ENCODE measurements at regions of chr12 and their contacts with region 1.

Region 1: GRCh38 chr12:95805864-95806671 is 15.5 kb upstream of the NTN4 start:
- DNase-seq: peak; percentile 61 to 100
- H3K4me3 ChIP-seq: peak overlapping the region; percentile 11; the same call in 1 of the 2 replicates
- H3K27ac ChIP-seq: peak overlapping the region; percentile 100
- H3K4me1 ChIP-seq: peaks cover 95% of the 10 kb centered on the region
- H3K27me3 ChIP-seq: no peaks in the 10 kb centered on the region
- CTCF ChIP-seq: no peak

Region 2: DNA sequence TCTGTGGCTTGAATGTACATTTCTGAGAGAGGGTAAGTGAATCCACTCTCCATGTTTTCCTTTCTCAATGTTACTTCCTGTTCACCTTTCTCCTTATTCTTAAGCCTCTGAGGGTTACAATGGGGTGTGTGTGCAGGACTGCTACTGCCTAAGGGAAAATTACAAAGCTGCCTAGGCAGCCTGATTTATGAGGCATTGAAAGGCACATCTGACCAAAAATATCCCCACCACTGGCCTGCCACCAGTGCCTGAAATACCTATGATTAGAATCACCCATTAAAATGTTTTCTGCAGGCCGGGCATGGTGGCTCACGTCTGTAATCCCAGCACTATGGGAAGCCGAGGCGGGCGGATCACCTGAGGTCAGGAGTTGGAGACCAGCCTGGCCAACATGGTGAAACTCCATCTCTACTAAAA is 156.7 kb before region 1 on chr12:
- CTCF ChIA-PET with region 1: no interaction called
- POLR2A ChIA-PET with region 1: interaction called, 9 read pairs
- intact Hi-C with region 1: loop called (anchors 2 kb)
- DNase-seq: peak; percentile 86 to 98
- H3K4me3 ChIP-seq: peak overlapping the region; percentile 27; the same call in 1 of the 2 replicates
- H3K27ac ChIP-seq: peak overlapping the region; percentile 98
- H3K4me1 ChIP-seq: peaks cover 72% of the 10 kb centered on the region
- H3K27me3 ChIP-seq: no peaks in the 10 kb centered on the region
- CTCF ChIP-seq: no peak

Region 3: DNA sequence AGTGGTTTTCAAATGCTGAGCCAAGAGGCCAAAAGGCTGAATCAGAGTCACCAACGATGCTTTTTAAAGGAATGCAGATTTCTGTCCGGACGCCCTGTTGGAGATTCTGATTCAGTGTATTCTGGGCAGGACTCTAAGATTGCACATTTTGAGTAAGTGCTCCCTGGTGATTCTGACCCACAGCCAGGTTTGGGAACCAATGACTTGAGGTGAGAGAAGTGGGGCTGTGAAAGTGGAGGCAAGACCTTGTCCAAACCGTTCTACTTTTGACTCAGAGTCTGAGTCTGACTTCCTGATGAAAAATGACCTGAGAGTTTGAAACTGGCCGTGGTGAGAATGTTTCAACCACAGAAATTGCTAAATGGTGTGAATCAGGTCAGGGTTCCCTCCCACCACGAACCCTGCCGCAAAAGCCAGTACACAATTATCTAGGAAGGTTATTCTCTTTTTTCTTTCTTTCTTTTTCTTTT is 105.7 kb before region 1 on chr12:
- CTCF ChIA-PET with region 1: no interaction called
- POLR2A ChIA-PET with region 1: no interaction called
- intact Hi-C with region 1: loop called (anchors 5 kb)
- DNase-seq: peak; percentile 10 to 91
- H3K4me3 ChIP-seq: no peak overlapping the region
- H3K27ac ChIP-seq: peak overlapping the region; percentile 96
- H3K4me1 ChIP-seq: peaks cover 37% of the 10 kb centered on the region
- H3K27me3 ChIP-seq: no peaks in the 10 kb centered on the region
- CTCF ChIP-seq: no peak

Region 4: GRCh38 chr12:95790033-95790911 is 15.8 kb before region 1 on chr12 and contains the start of gene NTN4:
- CTCF ChIA-PET with region 1: interaction called, 13 read pairs
- POLR2A ChIA-PET with region 1: interaction called, 5 read pairs
- intact Hi-C with region 1: loop called (anchors 2 kb)
- DNase-seq: peak in 1 of 2 experiments; percentile 44
- H3K4me3 ChIP-seq: peak within 1 kb of the TSS; percentile 93
- H3K27ac ChIP-seq: peak within 1 kb of the TSS; percentile 96
- H3K4me1 ChIP-seq: peaks cover 71% of the 10 kb centered on the region
- H3K27me3 ChIP-seq: no peaks in the 10 kb centered on the region
- CTCF ChIP-seq: no peak
- total RNA-seq, gene NTN4: 41.5 and 46.0 TPM in 2 replicates

Region 5: DNA sequence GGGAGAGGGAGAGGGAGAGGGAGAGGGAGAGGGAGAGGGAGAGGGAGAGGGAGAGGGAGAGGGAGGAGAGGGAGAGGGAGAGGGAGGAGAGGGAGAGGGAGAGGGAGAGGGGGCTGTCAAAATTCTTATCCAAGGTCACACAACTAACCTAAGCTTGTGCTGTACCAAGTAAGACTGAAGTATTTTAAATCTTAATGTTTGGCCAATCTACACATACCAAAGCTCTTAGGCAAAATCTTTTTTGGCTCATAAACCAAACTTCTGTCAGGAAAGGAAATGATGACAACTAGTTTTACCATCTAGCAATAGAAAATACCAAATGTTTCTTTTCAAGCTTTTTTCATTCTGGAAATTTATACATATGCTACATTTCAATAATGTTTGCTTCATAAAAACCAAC is 102.5 kb after region 1 on chr12:
- CTCF ChIA-PET with region 1: no interaction called
- POLR2A ChIA-PET with region 1: no interaction called
- intact Hi-C with region 1: no loop called
- DNase-seq: no peak
- H3K4me3 ChIP-seq: no peak overlapping the region
- H3K27ac ChIP-seq: no peak overlapping the region
- H3K4me1 ChIP-seq: no peaks in the 10 kb centered on the region
- H3K27me3 ChIP-seq: no peaks in the 10 kb centered on the region
- CTCF ChIP-seq: no peak

Region 6: DNA sequence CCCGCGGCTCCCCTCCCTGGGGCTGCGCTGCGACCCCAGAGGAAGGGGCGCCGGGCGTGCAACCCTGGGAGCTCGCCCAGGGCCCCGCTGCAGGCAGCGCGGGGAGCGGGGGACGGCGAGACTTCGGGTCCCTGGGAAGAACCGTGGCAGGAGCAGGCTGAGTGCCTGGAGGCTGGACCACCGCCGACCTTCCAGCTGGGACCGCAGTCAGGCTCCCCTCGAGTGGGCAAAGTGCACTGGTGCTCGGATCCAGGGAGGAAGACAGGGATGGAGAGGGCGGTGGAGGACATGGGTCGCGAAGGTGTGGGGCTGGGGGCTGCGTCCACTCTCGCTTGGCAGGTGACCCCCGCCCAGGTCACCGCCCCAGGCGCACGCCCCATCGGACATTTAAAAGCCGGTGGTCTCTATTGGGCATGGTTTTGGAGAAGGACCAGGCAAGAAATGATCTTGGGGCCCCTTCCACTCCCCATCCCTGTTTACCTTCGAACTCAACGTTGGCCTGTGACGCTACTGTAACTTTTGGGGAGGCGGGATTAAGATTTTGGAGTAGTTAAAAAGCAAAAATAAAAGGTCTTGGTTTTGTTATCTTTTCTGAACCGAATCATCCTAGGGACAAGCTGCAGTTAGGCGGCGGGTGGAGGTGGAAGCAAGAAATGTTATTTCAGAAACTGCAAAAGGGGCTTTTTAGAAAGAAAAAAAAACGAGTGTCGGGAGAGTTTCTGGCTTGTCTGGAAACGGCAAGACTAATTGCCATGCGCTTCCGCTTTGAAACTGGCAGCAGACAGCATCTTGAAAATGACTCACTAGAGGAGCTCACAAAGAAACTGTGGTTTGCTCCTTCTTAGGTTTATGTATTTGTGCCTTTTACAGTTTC is 389.1 kb after region 1 on chr12:
- CTCF ChIA-PET with region 1: no interaction called
- POLR2A ChIA-PET with region 1: no interaction called
- intact Hi-C with region 1: loop called (anchors 10 kb)
- DNase-seq: peak; percentile 55 to 83
- H3K4me3 ChIP-seq: peak overlapping the region; percentile 100
- H3K27ac ChIP-seq: peak overlapping the region; percentile 99
- H3K4me1 ChIP-seq: peaks cover 28% of the 10 kb centered on the region
- H3K27me3 ChIP-seq: no peaks in the 10 kb centered on the region
- CTCF ChIP-seq: no peak